ENCODE measurements at regions of chr7 and their contacts with region 1.

Region 1: DNA sequence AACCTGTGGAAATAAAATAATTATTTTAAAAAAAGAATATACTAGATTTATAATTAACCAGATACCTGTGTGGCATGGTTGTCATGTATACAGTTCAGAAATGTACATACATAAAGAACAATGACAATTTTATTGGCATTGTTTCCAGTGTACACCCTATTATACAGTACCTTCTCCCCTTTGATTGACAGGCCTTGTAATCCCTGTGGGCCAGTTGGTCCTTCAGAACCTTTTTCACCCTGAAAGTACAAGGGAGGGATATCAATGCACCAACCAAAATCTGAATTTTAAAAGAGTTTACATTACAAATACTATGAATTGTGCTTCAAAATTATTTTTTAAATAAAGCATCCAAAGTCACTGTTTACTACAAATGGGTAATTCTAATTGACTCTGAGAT is 61.2 kb downstream of the COL28A1 start:
- DNase-seq: no peak
- ATAC-seq: no peak
- H3K4me3 Mint-ChIP-seq: no peak overlapping the region
- H3K27ac Mint-ChIP-seq: no peak overlapping the region
- H3K4me1 Mint-ChIP-seq: no peaks in the 10 kb centered on the region
- H3K27me3 Mint-ChIP-seq: no peaks in the 10 kb centered on the region

Region 2: GRCh38 chr7:7375538-7375937 is 98.9 kb before region 1 on chr7:
- CTCF ChIA-PET with region 1: no interaction called
- POLR2A ChIA-PET with region 1: no interaction called
- intact Hi-C with region 1: no loop called
- DNase-seq: no peak
- ATAC-seq: no peak
- H3K4me3 Mint-ChIP-seq: no peak overlapping the region
- H3K27ac Mint-ChIP-seq: no peak overlapping the region
- H3K4me1 Mint-ChIP-seq: no peaks in the 10 kb centered on the region
- H3K27me3 Mint-ChIP-seq: peaks cover 3% of the 10 kb centered on the region

Region 3: DNA sequence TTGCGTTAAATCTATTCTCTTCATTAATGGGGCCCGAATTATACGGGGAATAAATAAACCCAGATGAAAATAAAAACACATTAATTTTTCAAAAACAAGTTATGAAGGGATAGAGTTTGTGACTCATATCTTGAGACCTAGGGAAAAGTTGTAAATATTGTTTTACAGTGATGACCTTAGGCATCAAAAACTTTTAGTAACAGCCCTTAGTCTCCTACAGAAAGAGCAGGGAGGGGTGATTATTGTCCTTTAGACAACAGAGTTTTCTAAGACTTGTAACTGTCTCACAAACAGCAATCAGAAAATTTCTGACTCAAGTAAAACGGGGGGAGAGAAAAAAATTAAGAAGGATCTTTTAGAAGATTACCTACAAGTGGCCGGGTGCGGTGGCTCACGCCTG is 41.5 kb before region 1 on chr7:
- CTCF ChIA-PET with region 1: no interaction called
- POLR2A ChIA-PET with region 1: interaction called, 10 read pairs
- intact Hi-C with region 1: no loop called
- DNase-seq: no peak
- ATAC-seq: no peak
- H3K4me3 Mint-ChIP-seq: no peak overlapping the region
- H3K27ac Mint-ChIP-seq: no peak overlapping the region
- H3K4me1 Mint-ChIP-seq: no peaks in the 10 kb centered on the region
- H3K27me3 Mint-ChIP-seq: peaks cover 4% of the 10 kb centered on the region

Measured in activated CD4-positive, alpha-beta T cell treated with anti-CD3 and anti-CD28 coated beads for 36 hours (primary cell).